BJ (cell line): ENCODE measurements at regions of chr16 and their contacts with region 1.

Region 1: GRCh38 chr16:71883849-71884638 is at the start of gene ZNF821:
- DNase-seq: no peak
- H3K4me3 ChIP-seq: peak within 1 kb of the TSS; percentile 81
- H3K27me3 ChIP-seq: no peaks in the 10 kb centered on the region
- CTCF ChIP-seq: peak; percentile 52
- polyA plus RNA-seq, gene ZNF821: 3.5 and 5.0 TPM in 2 replicates

Region 2: DNA sequence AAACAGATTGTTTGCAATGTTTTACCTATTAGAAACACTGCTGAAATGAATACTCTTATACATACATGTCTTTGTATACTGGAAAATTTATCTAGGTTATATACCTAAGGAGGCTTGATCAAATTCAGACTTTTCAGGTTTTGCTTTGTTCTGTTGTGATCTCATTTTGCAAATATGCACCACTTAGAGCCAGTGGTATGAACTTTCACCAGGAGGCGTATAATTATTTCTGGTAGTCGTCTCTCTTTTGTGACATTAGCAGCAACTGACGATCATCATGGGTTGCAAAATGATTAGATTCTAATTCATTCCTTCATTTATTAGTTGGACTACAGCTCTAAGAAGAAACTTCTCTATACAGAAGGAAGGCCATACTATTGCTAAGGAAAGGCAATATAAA is 102.3 kb before region 1 on chr16:
- CTCF ChIA-PET with region 1: no interaction called
- POLR2A ChIA-PET with region 1: no interaction called
- DNase-seq: no peak
- H3K4me3 ChIP-seq: no peak overlapping the region
- H3K27me3 ChIP-seq: no peaks in the 10 kb centered on the region
- CTCF ChIP-seq: no peak

Region 3: DNA sequence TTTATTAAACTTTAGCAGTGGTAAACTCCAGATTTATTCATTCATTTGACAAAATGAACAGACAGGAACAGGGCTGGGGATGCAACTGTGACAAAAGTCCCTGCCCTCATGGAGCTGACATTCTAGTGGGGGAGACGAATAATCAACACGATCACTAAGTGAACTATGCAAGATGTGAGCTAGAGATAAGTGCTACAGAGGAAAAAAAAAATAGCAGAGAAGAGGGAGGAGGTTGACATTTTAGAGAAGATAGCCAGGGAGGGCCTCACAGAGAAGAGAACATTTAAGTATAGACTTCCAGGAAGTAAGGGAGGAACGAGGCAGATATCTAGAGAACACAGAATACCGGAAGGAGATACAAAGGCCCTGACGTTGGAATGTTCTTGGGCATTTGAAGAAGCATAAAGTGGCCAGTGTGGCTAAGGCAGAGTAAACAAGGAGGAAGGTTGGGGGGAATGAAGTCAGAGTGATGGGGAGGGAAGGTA is 57.5 kb before region 1 on chr16:
- CTCF ChIA-PET with region 1: no interaction called
- POLR2A ChIA-PET with region 1: no interaction called
- DNase-seq: no peak
- H3K4me3 ChIP-seq: no peak overlapping the region
- H3K27me3 ChIP-seq: no peaks in the 10 kb centered on the region
- CTCF ChIP-seq: no peak

Region 4: GRCh38 chr16:71855937-71856662 is 27.9 kb before region 1 on chr16:
- CTCF ChIA-PET with region 1: interaction called, 17 read pairs
- POLR2A ChIA-PET with region 1: no interaction called
- DNase-seq: no peak
- H3K4me3 ChIP-seq: no peak overlapping the region
- H3K27me3 ChIP-seq: no peaks in the 10 kb centered on the region
- CTCF ChIP-seq: no peak

Region 5: GRCh38 chr16:71867939-71868338 is 16.1 kb before region 1 on chr16:
- CTCF ChIA-PET with region 1: interaction called, 90 read pairs
- POLR2A ChIA-PET with region 1: no interaction called
- DNase-seq: no peak
- H3K4me3 ChIP-seq: no peak overlapping the region
- H3K27me3 ChIP-seq: no peaks in the 10 kb centered on the region
- CTCF ChIP-seq: no peak

Region 6: DNA sequence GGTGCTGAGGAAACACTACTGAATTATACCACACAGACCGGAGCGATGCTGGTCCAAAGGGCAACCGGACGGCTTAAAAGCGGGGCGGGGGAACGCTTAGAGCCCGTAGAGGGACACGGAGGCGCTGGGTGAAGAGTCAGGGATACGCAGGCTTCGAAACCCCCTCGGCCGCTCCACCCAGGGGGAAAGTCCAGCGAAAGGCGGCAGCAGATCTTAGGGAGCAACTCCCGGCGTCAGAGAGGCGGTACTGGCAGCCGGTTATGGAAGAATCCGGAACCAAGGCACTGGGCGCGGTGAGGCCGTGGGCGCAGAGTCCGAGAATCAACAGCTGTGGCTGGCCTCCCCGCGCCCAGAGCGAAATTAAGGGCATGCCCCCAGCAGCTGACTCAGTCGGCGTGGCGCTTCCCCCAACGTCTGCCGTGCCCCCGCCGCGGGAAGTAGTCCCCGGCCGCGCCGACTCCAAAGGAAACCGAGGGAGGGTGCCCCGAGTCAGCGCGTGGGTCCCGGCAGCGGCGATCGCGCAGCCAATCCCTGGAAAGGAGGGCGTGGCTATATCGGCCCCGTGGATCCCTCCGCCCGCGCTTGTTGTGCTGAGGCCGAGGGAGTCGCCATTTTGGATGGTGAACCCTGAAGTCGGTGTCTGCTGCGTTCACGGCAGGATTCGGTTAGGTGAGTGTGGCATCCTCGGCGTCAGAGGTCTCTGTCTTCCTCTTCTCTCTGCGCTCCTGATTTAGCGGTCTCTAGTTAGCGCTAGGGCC is 11.1 kb after region 1 on chr16 and contains the start of gene IST1:
- CTCF ChIA-PET with region 1: interaction called, 30 read pairs
- POLR2A ChIA-PET with region 1: interaction called, 7 read pairs
- DNase-seq: peak; percentile 76
- H3K4me3 ChIP-seq: peak within 1 kb of the TSS; percentile 96
- H3K27me3 ChIP-seq: no peaks in the 10 kb centered on the region
- CTCF ChIP-seq: peak; percentile 16; the same call in 1 of the 2 replicates
- polyA plus RNA-seq, gene IST1: 227 and 236 TPM in 2 replicates

Region 7: DNA sequence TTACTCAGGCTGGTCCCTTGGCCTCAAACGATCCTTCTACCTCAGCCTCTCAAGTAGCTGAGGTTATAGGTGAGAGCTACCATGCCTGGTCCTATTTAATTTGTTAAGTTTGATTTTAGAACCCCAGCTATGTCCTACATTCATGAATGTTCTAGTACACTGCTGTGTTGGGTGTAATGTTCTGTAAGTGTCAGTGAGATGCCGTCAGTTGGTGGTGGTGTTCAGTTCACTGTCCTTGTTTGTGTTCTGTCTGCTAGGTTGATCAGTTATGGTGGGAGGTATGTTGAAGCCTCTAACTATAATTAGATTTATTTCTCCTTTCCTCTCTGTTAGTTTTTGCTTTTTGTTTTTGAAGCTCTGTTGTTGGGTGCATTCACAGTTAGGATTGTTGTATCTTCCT is 19.6 kb after region 1 on chr16:
- CTCF ChIA-PET with region 1: interaction called, 14 read pairs
- POLR2A ChIA-PET with region 1: interaction called, 7 read pairs
- DNase-seq: no peak
- H3K4me3 ChIP-seq: no peak overlapping the region
- H3K27me3 ChIP-seq: no peaks in the 10 kb centered on the region
- CTCF ChIP-seq: no peak

Region 8: DNA sequence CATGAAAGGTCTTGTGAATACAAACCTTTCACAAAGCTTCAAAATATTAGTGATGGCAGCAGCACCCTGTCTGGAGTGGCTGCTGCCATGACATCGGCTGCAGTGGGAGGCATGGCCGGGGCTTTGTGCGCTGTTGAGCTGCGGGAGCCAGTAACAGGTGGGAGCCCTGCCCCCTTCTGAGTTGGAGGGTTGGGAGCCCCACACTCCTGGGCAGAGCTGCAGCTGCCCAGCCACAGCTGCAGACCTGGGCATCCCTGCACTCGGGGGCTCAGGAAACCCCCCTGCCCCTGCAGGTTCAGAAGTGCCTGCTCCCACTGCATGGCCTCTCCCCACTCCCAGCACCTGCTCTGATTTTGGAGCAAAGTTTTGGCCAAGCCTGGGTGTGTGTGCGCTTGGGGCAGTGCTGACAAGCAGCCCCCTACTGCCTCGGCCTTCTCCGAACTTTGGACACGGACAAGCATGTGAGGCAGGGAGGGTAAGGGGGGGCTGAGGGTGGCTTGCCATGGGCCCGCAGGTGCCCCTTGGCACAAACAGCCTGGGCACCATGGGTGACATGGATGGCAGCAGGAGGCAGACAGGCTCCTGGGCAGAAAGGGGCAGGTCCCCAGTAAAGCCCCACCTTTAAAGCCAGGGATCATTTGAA is 53.9 kb after region 1 on chr16:
- CTCF ChIA-PET with region 1: interaction called, 11 read pairs
- POLR2A ChIA-PET with region 1: no interaction called
- DNase-seq: no peak
- H3K4me3 ChIP-seq: no peak overlapping the region
- H3K27me3 ChIP-seq: no peaks in the 10 kb centered on the region
- CTCF ChIP-seq: no peak

Region 9: GRCh38 chr16:71961066-71962039 is 77.3 kb after region 1 on chr16:
- CTCF ChIA-PET with region 1: interaction called, 39 read pairs
- POLR2A ChIA-PET with region 1: no interaction called
- DNase-seq: peak; percentile 36
- H3K4me3 ChIP-seq: no peak overlapping the region
- H3K27me3 ChIP-seq: no peaks in the 10 kb centered on the region
- CTCF ChIP-seq: peak; percentile 80